Left cardiac atrium (tissue), 4 donors: ENCODE measurements at regions of chr3 and their contacts with region 1.

Region 1: GRCh38 chr3:12984023-12984823 is 89.0 kb downstream of the IQSEC1 start:
- DNase-seq: peak; percentile 63
- ATAC-seq: peak; percentile 82 to 86

Region 2: GRCh38 chr3:12287727-12288191 is 696.5 kb before region 1 on chr3:
- intact Hi-C with region 1: no loop called
- DNase-seq: peak; percentile 62
- ATAC-seq: peak; percentile 88 to 93

Region 3: GRCh38 chr3:12868039-12869034 is 115.9 kb before region 1 on chr3:
- intact Hi-C with region 1: loop called in 1 of 2 experiments (anchors 5 kb)
- DNase-seq: peak; percentile 88
- ATAC-seq: peak; percentile 92 to 94

Region 4: DNA sequence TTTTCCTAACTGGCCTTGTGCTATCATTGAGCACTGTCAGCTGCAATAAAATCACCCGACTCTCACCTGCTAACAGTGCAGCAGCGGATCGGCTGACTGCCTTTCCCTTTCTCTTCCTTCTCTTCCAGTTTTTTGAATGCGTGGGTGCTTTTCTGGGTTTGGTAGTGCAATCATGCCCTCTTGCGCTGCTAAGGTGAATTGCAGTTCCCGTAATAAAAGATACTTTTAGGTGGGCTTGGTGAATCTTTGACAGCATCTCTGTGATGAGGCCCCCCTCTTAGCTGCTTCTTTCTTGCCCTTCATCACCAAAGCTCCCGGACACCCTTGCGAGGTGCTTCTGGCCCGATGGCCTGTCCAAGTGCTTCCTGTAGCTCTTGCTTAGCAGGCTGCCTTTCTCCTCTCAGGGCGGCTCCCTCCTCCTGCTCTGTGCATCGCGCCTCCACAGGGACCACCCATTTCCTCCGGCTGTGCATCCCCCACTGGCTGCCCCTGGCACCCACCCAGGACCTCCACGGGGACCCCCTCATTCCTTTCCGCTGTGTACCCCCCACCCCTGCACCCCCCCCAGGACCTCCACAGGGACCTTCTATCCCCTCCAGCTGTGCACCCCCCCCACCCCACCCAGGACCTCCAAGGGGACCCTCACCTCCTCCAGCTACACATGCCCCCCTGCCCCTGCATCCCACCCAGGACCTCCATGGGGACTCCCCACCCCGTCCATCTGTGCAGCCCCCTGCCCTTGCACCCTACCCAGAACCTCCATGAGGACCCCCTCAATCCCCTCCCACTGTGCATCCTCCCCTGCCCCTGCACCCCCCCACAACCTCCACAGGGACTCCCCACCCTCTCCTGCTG is 92.0 kb before region 1 on chr3:
- intact Hi-C with region 1: loop called (anchors 10 kb)
- DNase-seq: no peak
- ATAC-seq: peak; percentile 32 to 45

Region 5: GRCh38 chr3:12948891-12949711 is 35.1 kb before region 1 on chr3:
- intact Hi-C with region 1: loop called in 1 of 2 experiments (anchors 5 kb)
- DNase-seq: no peak
- ATAC-seq: peak; percentile 9 to 24

Region 6: GRCh38 chr3:13215940-13216546 is 231.8 kb after region 1 on chr3:
- intact Hi-C with region 1: no loop called
- DNase-seq: no peak
- ATAC-seq: peak in 1 of 2 donors; percentile 24